RWPE1 (cell line): ENCODE measurements at regions of chr6 and their contacts with region 1.

Region 1: GRCh38 chr6:99641270-99641669 is 34.6 kb downstream of the PRDM13 start:
- DNase-seq: no peak
- H3K27ac ChIP-seq: no peak overlapping the region
- CTCF ChIP-seq: no peak

Region 2: GRCh38 chr6:99607416-99608036 is 33.7 kb before region 1 on chr6:
- CTCF ChIA-PET with region 1: interaction called, 11 read pairs
- POLR2A ChIA-PET with region 1: no interaction called
- DNase-seq: no peak
- H3K27ac ChIP-seq: no peak overlapping the region
- CTCF ChIP-seq: no peak

Region 3: DNA sequence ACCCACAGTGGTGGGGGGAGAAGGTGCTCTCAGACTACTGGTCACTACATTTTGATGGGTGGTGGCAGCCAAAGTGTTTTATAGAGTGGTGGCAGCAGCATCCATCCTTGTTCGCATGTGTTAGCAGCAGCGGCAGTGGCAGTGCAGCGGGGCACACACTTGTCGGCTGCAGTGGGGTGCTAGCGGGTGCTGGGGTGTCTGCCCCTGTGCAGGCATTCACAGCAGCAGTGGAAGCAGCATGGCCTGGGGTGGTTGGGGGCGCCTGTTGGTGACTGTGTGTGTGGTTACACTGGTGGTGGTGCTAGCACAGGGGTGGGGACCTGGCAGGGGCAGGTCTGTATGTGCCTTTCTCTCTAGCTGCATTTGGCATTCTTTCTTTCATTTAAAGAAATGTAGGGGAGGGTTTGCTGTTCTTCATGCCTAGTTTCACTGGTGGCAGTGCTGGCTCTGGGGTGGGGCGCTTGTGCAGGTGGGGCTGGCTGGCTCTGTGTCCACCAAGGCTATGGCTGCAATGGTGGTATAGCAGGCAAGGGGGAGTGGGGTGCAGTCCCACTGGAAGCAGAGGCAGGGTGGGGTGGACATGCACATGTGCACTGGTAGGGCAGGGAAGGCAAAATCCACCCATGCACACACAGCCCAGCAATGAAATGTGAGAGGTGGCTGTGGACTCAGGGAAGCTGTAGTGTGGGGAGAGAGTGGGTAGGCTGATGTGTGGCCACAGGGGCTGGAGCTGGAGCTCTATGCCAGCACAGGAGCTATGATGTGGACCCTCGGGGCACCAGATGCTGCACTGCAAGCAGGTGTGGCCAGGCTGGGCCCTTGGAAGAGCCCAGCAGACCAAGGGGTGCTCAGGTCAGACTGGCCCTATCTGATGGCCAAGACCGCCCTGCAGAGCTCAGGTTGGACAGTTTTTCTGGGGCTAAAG is 138.6 kb after region 1 on chr6:
- CTCF ChIA-PET with region 1: no interaction called
- POLR2A ChIA-PET with region 1: no interaction called
- DNase-seq: no peak
- H3K27ac ChIP-seq: no peak overlapping the region
- CTCF ChIP-seq: no peak